Endothelial cell of umbilical vein (primary cell): ENCODE measurements at regions of chr10 and their contacts with region 1.

Region 1: GRCh38 chr10:102904346-102904745 is 13.7 kb upstream of the CNNM2 start:
- DNase-seq: no peak
- H3K4me3 ChIP-seq: no peak overlapping the region
- H3K27ac ChIP-seq: no peak overlapping the region
- H3K4me1 ChIP-seq: no peaks in the 10 kb centered on the region
- H3K27me3 ChIP-seq: no peaks in the 10 kb centered on the region
- CTCF ChIP-seq: no peak
- POLR2A ChIP-seq: no peak

Region 2: GRCh38 chr10:102720775-102721301 is 183.5 kb before region 1 on chr10:
- CTCF ChIA-PET with region 1: interaction called, 62 read pairs
- POLR2A ChIA-PET with region 1: no interaction called
- dilution Hi-C with region 1: no loop called
- intact Hi-C with region 1: no loop called
- DNase-seq: no peak
- H3K4me3 ChIP-seq: no peak overlapping the region
- H3K27ac ChIP-seq: no peak overlapping the region
- H3K4me1 ChIP-seq: peaks cover 5% of the 10 kb centered on the region
- H3K27me3 ChIP-seq: no peaks in the 10 kb centered on the region
- CTCF ChIP-seq: no peak
- POLR2A ChIP-seq: no peak

Region 3: GRCh38 chr10:102743588-102744373 is 160.6 kb before region 1 on chr10 and contains the start of gene WBP1L:
- CTCF ChIA-PET with region 1: interaction called, 14 read pairs
- POLR2A ChIA-PET with region 1: no interaction called
- dilution Hi-C with region 1: no loop called
- intact Hi-C with region 1: no loop called
- DNase-seq: peak; percentile 100
- H3K4me3 ChIP-seq: peak within 1 kb of the TSS; percentile 43 to 91 (median 52)
- H3K27ac ChIP-seq: peak within 1 kb of the TSS; percentile 35
- H3K4me1 ChIP-seq: peaks cover 15% of the 10 kb centered on the region
- H3K27me3 ChIP-seq: no peaks in the 10 kb centered on the region
- CTCF ChIP-seq: no peak
- POLR2A ChIP-seq: peak; percentile 45
- total RNA-seq, gene WBP1L: 43.6 and 46.0 TPM in 2 replicates

Region 4: GRCh38 chr10:102764389-102765178 is 139.8 kb before region 1 on chr10:
- CTCF ChIA-PET with region 1: interaction called, 6 read pairs
- POLR2A ChIA-PET with region 1: interaction called, 11 read pairs
- dilution Hi-C with region 1: no loop called
- intact Hi-C with region 1: no loop called
- DNase-seq: no peak
- H3K4me3 ChIP-seq: no peak overlapping the region
- H3K27ac ChIP-seq: no peak overlapping the region
- H3K4me1 ChIP-seq: peaks cover 9% of the 10 kb centered on the region
- H3K27me3 ChIP-seq: no peaks in the 10 kb centered on the region
- CTCF ChIP-seq: no peak
- POLR2A ChIP-seq: no peak

Region 5: DNA sequence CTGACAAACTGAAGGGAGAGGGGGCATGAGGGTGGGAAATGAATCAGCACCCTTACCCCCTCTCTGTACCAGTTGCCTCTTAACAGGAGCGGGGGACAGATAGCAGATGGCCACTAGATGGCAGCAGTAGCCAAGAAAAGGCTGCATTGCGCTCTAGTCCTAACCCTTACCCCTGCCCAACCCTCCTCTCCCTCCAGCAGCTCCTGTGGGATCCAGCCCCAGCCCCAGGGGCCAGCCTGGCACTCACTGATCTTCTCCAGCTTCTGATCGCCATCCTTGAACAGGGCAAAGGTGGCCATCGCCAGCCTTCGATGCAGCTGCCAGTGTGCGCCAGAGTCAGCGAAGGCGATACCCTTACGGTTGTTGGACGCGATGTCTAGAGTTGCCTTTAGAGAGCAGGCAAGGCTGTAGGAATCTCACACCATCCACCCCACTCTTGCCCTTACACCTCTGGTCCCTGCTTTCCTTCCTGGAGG is 69.3 kb before region 1 on chr10:
- CTCF ChIA-PET with region 1: interaction called, 245 read pairs
- POLR2A ChIA-PET with region 1: no interaction called
- dilution Hi-C with region 1: no loop called
- intact Hi-C with region 1: loop called (anchors 1 kb)
- DNase-seq: peak; percentile 80
- H3K4me3 ChIP-seq: no peak overlapping the region
- H3K27ac ChIP-seq: no peak overlapping the region
- H3K4me1 ChIP-seq: no peaks in the 10 kb centered on the region
- H3K27me3 ChIP-seq: peaks cover 0 to 4% of the 10 kb centered on the region in 2 experiments
- CTCF ChIP-seq: peak; percentile 82 to 85
- POLR2A ChIP-seq: no peak

Region 6: DNA sequence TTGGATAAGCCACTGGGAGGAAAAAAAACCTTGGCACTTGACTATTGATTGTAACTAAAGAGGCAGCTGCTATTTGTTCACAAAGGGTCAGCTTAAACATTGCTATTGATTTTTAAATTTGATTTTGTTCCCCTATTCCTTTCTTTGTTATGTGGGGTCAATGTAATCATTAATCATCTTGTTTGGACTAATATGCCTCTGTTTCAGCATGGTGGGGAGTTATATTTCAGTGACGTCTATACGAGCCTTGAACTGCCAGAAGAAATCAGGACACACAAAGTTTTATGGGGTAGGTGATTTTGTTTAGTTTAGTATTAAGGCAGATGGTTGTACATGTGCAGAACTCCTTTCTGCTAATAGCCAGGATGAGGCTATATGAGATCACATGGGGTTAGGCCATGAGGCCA is 27.6 kb before region 1 on chr10:
- CTCF ChIA-PET with region 1: interaction called, 20 read pairs
- POLR2A ChIA-PET with region 1: no interaction called
- dilution Hi-C with region 1: no loop called
- intact Hi-C with region 1: no loop called
- DNase-seq: no peak
- H3K4me3 ChIP-seq: no peak overlapping the region
- H3K27ac ChIP-seq: no peak overlapping the region
- H3K4me1 ChIP-seq: no peaks in the 10 kb centered on the region
- H3K27me3 ChIP-seq: peaks cover 0 to 6% of the 10 kb centered on the region in 2 experiments
- CTCF ChIP-seq: no peak
- POLR2A ChIP-seq: no peak